Stomach (tissue), 19 donors: ENCODE measurements at regions of chr5 and their contacts with region 1.

Region 1: GRCh38 chr5:142881076-142881783 is 111.1 kb downstream of the ARHGAP26 start:
- DNase-seq: no peak
- H3K4me3 ChIP-seq: no peak overlapping the region
- H3K27ac ChIP-seq: no peak overlapping the region
- H3K4me1 ChIP-seq: peaks cover 0 to 45% (median 12%) of the 10 kb centered on the region in 4 donors
- H3K27me3 ChIP-seq: no peaks in the 10 kb centered on the region
- CTCF ChIP-seq: no peak
- EP300 ChIP-seq: no peak
- POLR2A ChIP-seq: no peak

Region 2: DNA sequence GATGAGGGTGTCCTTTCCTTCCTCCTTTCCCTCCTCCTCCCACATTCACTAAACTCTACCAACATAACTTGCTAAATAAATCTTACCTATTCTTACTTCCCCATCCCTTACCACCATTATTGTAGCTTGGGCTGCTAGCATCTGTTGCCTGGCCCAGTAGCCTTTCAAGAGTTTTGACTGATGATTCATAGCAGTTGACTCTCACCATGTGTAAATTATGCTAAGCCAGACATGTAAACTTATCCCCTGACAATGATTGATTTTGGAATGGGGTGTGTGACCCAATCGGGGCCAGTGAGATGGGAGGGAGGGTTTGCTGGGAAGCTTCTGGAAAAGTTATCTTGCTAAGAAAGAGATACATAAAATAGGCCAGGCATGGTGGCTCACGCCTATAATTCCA is 394.6 kb before region 1 on chr5:
- intact Hi-C with region 1: no loop called
- DNase-seq: no peak
- H3K4me3 ChIP-seq: no peak overlapping the region
- H3K27ac ChIP-seq: no peak overlapping the region
- H3K4me1 ChIP-seq: peaks cover 0 to 7% (median 2%) of the 10 kb centered on the region in 4 donors
- H3K27me3 ChIP-seq: no peaks in the 10 kb centered on the region
- CTCF ChIP-seq: no peak
- EP300 ChIP-seq: no peak
- POLR2A ChIP-seq: no peak

Region 3: GRCh38 chr5:142716963-142717362 is 164.3 kb before region 1 on chr5:
- intact Hi-C with region 1: loop called (anchors 5 kb)
- DNase-seq: peak; percentile 52 to 81
- H3K4me3 ChIP-seq: no peak overlapping the region
- H3K27ac ChIP-seq: no peak overlapping the region
- H3K4me1 ChIP-seq: peaks cover 8 to 40% (median 26%) of the 10 kb centered on the region in 4 donors
- H3K27me3 ChIP-seq: no peaks in the 10 kb centered on the region
- CTCF ChIP-seq: peak in 2 of 7 experiments; percentile 18 to 39
- EP300 ChIP-seq: no peak
- POLR2A ChIP-seq: no peak